Activated CD8-positive, alpha-beta T cell treated with anti-CD3 and anti-CD28 coated beads, Interleukin-2, amount 10 ng/mL, durations not matched to agents 7 days and 5 days (primary cell): ENCODE measurements at regions of chr5 and their contacts with region 1.

Region 1: GRCh38 chr5:14676320-14676719 is 11.8 kb downstream of the OTULIN start:
- DNase-seq: peak; percentile 56
- ATAC-seq: peak; percentile 80
- H3K4me3 Mint-ChIP-seq: peak overlapping the region; percentile 63
- H3K27ac Mint-ChIP-seq: peak overlapping the region; percentile 83
- H3K4me1 Mint-ChIP-seq: peaks cover 71% of the 10 kb centered on the region
- H3K27me3 Mint-ChIP-seq: no peaks in the 10 kb centered on the region

Region 2: DNA sequence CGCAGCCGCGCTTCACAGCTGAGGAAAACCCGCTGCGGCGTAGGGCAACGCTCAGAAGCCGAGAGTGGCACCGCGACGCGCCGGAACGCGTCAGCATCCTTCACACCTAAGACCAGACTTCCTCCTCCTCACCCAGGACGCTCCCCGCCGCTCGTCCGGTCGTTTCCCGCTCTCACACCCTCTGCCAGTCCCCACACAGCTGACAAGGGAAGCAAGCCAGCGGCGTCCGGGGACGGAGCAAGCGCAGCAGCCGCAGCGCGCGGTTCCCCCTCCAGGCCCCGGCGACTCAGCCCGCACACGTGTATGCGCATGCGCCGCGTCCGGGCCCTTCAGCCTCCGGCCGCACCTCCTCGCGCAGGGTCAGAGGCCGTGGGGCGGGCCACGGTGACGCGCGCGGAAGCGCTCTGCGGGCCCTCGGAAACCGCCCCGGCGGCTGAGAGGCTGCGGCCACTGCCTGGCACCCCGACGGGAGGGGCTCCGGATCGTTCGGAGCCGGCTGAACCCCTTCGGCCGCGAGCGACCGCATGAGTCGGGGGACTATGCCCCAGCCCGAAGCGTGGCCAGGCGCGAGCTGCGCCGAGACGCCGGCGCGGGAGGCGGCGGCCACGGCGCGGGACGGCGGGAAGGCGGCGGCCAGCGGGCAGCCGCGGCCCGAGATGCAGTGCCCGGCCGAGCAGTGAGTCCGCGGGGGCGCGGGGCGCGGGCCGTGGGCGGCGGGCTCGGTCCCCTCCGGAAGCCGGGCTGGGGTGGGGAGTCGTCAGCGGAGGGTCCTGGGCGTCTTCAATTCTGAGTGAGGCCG is 11.8 kb before region 1 on chr5 and contains the start of gene OTULIN:
- CTCF ChIA-PET with region 1: interaction called, 10 read pairs
- POLR2A ChIA-PET with region 1: interaction called, 5 read pairs
- DNase-seq: peak; percentile 91
- ATAC-seq: peak; percentile 73
- H3K4me3 Mint-ChIP-seq: peak within 1 kb of the TSS; percentile 94
- H3K27ac Mint-ChIP-seq: peak within 1 kb of the TSS; percentile 98
- H3K4me1 Mint-ChIP-seq: peaks cover 73% of the 10 kb centered on the region
- H3K27me3 Mint-ChIP-seq: no peaks in the 10 kb centered on the region
- total RNA-seq, gene OTULIN: 71.2 to 80.7 TPM

Region 3: DNA sequence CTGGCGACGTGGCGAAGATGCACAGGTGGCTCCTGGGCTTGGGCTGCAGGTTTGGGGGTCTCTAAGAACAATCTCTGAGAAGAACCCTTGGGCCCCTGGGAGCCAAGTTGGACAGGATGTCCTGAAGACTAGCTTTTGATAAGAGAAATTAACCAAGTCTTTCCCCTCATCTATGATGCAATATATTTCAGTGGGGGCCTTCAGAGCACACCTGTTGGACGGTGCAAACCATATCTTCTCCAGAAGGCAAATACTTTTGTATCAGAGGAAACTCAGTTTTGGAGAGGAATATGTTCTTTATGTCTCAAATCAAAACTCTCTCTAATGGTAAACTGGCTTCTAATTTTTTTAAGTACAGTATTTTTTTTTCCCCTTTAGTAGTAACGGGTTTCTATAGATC is 16.8 kb after region 1 on chr5:
- CTCF ChIA-PET with region 1: no interaction called
- POLR2A ChIA-PET with region 1: no interaction called
- DNase-seq: no peak
- ATAC-seq: no peak
- H3K4me3 Mint-ChIP-seq: no peak overlapping the region
- H3K27ac Mint-ChIP-seq: no peak overlapping the region
- H3K4me1 Mint-ChIP-seq: peaks cover 2% of the 10 kb centered on the region
- H3K27me3 Mint-ChIP-seq: no peaks in the 10 kb centered on the region

Region 4: DNA sequence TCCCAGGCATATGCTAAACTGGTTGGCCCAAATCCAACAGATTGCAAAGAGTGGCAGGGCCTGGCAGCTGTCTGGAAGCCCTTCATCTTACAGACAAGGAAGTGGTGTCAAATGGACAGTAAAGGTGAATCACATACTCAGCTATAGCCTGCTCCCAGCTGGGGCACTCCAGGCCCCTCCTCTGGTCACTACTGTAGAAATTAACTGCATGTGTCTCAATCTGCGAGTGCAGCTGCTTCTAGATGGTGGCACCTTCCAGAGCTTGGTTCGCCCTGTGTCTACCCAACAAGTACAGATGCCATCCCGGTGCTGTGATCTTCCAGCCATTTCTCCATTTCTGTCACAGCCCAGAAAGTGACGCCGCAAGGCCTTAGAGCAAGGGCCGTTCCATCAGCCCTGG is 38.4 kb after region 1 on chr5:
- CTCF ChIA-PET with region 1: no interaction called
- POLR2A ChIA-PET with region 1: no interaction called
- DNase-seq: no peak
- ATAC-seq: no peak
- H3K4me3 Mint-ChIP-seq: no peak overlapping the region
- H3K27ac Mint-ChIP-seq: peak overlapping the region; percentile 43
- H3K4me1 Mint-ChIP-seq: peaks cover 10% of the 10 kb centered on the region
- H3K27me3 Mint-ChIP-seq: no peaks in the 10 kb centered on the region